Mammary epithelial cell (primary cell): ENCODE measurements at regions of chr6 and their contacts with region 1.

Region 1: GRCh38 chr6:37483917-37484785 is 15.5 kb downstream of the CCDC167 start:
- DNase-seq: peak; percentile 20
- H3K4me3 ChIP-seq: no peak overlapping the region
- H3K27ac ChIP-seq: no peak overlapping the region
- H3K4me1 ChIP-seq: no peaks in the 10 kb centered on the region
- H3K27me3 ChIP-seq: no peaks in the 10 kb centered on the region
- CTCF ChIP-seq: peak; percentile 81 to 87

Region 2: GRCh38 chr6:37324131-37325033 is 159.8 kb before region 1 on chr6:
- CTCF ChIA-PET with region 1: no interaction called
- dilution Hi-C with region 1: no loop called
- in situ Hi-C with region 1: no loop called
- intact Hi-C with region 1: loop called (anchors 5 kb)
- DNase-seq: peak; percentile 78
- H3K4me3 ChIP-seq: no peak overlapping the region
- H3K27ac ChIP-seq: no peak overlapping the region
- H3K4me1 ChIP-seq: peaks cover 15% of the 10 kb centered on the region
- H3K27me3 ChIP-seq: no peaks in the 10 kb centered on the region
- CTCF ChIP-seq: no peak

Region 3: DNA sequence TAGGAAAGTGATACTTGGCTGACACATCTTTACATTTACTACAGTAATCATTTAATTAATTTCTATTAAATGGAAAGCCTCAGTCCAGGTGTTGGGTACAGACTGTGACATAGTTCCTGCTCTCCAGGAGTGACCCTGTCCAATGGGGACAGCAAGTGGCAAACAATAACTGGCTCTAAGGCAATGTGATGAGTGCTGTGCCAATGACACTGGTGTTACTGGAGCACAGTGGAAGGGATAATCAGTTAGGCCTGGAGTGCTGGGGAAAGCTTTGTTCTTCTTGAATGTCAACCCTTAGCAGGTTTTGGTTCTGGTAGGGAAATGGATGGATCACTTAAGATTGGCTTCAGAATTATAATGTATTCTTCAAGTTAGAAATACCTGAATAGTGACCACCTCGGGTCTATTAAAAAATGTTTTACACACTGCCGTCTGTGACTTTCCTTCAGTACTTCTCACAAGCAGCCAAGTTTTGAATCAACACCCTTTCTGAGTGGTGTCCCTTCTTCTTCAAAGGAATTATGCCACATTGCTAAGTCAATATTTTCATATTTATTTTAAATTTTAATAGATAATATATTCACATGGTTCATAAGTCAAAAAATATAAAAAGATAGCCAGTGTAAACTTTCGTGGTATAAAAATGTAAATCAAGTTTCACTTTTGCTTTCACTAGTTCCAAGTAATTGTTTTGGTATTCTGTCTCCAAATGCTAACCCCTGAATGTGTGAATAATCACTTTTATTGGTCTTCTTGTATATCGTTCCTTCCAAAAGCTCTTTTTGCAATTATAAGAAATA is 41.5 kb before region 1 on chr6:
- CTCF ChIA-PET with region 1: no interaction called
- dilution Hi-C with region 1: no loop called
- in situ Hi-C with region 1: no loop called
- intact Hi-C with region 1: no loop called
- DNase-seq: no peak
- H3K4me3 ChIP-seq: no peak overlapping the region
- H3K27ac ChIP-seq: no peak overlapping the region
- H3K4me1 ChIP-seq: no peaks in the 10 kb centered on the region
- H3K27me3 ChIP-seq: no peaks in the 10 kb centered on the region
- CTCF ChIP-seq: no peak

Region 4: DNA sequence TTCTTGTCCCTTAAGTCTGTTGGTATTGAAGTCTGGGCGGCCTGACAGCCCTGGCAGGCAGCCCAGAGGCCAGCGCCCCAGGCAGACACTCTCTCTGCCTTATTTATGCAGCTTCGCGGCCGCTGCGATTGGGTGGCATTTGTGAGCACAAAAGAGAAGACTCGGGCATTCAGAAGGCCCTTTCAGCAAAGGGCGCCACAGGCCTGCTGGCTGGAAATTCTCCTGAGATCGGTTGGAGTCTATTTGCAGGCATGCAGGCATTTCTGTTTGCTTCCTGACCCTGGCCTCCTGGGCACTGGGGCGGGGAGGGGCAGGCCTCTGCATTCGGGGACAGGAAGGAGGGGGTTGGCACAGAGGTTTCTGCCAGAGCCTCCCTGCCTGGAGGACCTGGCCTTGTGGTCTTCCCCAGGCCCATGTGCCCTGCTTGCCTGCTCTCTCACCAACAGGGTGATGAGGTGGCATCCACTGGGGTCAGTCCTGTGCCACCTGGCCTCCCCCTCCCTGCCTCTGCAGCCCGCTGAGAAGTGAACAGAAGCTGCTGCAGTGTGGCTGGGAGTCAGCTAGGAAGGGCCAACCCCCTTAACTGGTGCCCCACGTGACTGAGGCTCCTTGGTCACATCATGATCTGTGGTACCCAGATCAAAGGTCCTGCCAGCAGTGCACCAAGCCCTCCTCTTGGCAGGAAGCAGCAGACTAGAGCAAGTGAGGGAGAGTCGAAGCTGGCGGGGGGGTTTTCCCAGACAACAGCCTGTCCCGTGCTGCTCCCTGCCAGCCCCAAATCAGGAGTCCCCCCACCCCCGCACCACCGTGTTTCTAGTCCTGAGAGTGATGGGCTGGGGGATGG is 32.1 kb after region 1 on chr6:
- CTCF ChIA-PET with region 1: no interaction called
- dilution Hi-C with region 1: no loop called
- in situ Hi-C with region 1: no loop called
- intact Hi-C with region 1: no loop called
- DNase-seq: peak; percentile 48
- H3K4me3 ChIP-seq: no peak overlapping the region
- H3K27ac ChIP-seq: no peak overlapping the region
- H3K4me1 ChIP-seq: peaks cover 26% of the 10 kb centered on the region
- H3K27me3 ChIP-seq: no peaks in the 10 kb centered on the region
- CTCF ChIP-seq: no peak

Region 5: GRCh38 chr6:37538107-37538506 is 54.0 kb after region 1 on chr6:
- CTCF ChIA-PET with region 1: no interaction called
- dilution Hi-C with region 1: no loop called
- in situ Hi-C with region 1: no loop called
- intact Hi-C with region 1: loop called (anchors 1 kb)
- DNase-seq: peak; percentile 35
- H3K4me3 ChIP-seq: no peak overlapping the region
- H3K27ac ChIP-seq: no peak overlapping the region
- H3K4me1 ChIP-seq: peaks cover 8% of the 10 kb centered on the region
- H3K27me3 ChIP-seq: peaks cover 4% of the 10 kb centered on the region
- CTCF ChIP-seq: peak; percentile 52 to 82